ENCODE measurements at regions of chr1 and their contacts with region 1.

Region 1: DNA sequence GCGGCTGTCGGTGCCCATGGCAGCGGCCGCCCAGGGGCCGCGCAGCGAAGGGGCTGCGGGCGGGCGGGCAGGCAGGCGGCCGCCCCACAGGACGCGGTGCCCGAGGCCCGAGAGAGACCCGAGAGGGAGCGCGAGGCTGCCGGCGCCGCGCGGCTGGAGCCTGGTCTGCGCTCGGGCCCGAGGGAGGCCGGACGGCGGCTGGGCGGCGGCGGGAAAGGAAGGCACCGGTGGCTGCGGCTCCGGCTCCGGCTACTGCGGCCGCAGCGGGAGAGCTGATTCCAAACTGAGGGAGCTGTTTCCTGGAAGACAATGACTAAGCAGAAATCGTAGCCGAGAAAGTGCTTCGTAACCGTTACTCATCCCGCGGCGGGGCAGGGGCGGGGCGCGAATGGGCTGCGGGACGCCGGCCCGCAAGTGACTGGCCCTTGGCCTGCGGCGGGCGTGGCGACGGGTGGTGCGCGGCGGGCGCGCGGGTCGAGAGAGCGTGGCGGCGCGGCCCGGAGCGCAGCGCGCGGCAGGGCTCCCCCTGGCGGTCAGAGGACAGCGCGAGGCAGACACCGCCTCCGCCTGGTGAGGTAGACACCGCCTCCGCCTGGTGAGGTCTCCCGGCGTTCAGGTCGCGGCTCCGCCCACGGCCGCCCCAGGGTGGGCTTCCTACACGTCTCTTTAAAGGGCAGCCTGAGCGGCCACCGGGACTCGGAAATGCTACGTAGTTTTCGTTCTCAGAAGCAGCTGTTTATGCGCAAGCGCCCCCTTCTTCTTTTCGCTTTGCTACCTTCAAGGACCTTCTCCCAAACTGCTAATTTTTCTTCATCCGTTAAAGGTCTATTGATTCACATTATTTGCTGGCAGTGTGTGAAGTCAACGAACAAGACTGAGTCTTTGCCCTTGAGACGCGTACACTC is at the start of gene GCLM:
- DNase-seq: peak; percentile 94
- ATAC-seq: peak; percentile 94
- H3K4me3 ChIP-seq: peak within 1 kb of the TSS; percentile 74
- H3K27ac ChIP-seq: peak within 1 kb of the TSS; percentile 32
- H3K4me1 ChIP-seq: peaks cover 4% of the 10 kb centered on the region
- H3K27me3 ChIP-seq: no peaks in the 10 kb centered on the region
- CTCF ChIP-seq: peak; percentile 98
- POLR2A ChIP-seq: peak; percentile 92
- RAD21 ChIP-seq: peak; percentile 41; the same call in 1 of the 2 replicates
- total RNA-seq, gene GCLM: 18.3 and 20.1 TPM in 2 replicates

Region 2: DNA sequence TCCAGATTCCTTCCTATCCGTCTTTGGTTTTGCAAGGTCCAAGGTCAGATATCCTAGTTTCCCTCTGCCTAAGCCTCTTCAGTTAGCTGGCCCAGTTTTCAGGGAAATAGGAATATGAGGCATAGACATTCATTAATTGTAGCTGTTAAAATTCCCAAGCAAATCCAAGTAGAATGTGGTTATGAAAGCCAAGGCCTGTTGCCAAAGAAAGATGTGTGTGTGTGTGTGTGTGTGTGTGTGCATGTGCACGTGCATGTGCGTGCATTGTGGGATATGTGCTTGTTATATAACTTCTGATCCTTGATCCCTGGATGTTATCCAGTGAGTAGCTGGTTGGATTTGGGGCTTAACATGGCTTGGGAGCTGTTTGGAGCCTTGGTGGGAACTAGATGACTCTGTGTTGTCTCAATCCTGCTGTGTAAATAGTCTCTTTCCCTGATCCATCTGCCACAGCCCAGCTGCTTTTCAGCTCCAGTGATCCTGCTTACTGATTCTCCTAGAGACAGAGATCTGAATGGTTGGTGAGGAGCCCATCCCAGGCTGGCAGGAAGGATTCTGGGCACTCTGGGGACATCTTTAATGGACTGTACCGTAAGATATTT is 70.4 kb after region 1 on chr1:
- CTCF ChIA-PET with region 1: no interaction called
- POLR2A ChIA-PET with region 1: no interaction called
- dilution Hi-C with region 1: no loop called
- in situ Hi-C with region 1: no loop called
- intact Hi-C with region 1: loop called (anchors 1 kb)
- DNase-seq: peak; percentile 69
- ATAC-seq: peak; percentile 67
- H3K4me3 ChIP-seq: no peak overlapping the region
- H3K27ac ChIP-seq: peak overlapping the region; percentile 83; the same call in 1 of the 2 replicates
- H3K4me1 ChIP-seq: peaks cover 22% of the 10 kb centered on the region
- H3K27me3 ChIP-seq: peaks cover 6% of the 10 kb centered on the region; the same call in 1 of the 2 replicates
- CTCF ChIP-seq: no peak
- POLR2A ChIP-seq: no peak
- RAD21 ChIP-seq: no peak

Region 3: DNA sequence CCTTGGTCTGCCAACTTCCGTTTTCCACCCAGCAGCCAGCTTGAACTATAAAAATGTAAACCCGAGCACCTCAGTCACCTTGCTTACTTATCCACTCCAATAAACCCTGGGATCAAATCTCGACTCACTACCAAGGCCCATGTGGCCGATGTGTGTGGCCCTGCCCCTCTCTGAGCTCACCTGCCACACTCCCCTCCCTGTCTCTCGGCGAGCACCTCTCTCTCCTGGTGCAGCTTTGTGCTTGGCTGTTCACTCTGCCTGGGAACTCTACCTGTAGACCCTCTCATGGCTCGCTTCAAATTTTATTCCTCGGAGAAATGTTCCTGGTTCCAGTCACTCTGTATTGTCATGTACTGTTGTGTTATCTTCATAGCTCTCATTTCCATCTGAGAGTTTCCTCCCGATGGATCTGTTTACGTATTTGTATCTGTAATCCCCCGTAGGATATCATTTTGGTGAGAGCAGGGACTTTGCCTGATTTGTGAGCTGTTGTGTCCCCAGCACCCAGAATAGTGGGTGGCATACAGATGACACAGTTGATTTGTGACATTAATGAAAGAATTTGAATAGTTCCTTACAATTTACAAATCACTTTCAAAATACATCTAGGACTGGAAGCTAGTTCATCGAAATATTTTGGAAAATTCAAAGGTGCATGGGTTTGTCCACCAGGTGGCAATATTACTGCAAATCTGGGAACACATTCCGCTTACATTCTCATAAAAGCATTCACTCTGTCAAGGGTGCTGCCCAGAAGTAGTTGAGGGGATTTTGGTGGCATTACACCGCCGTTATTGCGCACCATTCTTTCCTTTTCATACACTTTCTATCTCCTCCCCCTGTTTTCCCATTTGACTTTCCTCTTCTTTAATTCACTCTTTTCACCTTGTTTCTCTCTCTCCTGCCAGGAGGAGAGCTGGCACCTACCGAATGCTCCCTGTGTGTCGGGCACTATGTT is 116.3 kb after region 1 on chr1:
- CTCF ChIA-PET with region 1: interaction called, 3 read pairs
- POLR2A ChIA-PET with region 1: no interaction called
- dilution Hi-C with region 1: no loop called
- in situ Hi-C with region 1: no loop called
- intact Hi-C with region 1: loop called (anchors 1 kb)
- DNase-seq: peak; percentile 79
- ATAC-seq: peak; percentile 50
- H3K4me3 ChIP-seq: no peak overlapping the region
- H3K27ac ChIP-seq: no peak overlapping the region
- H3K4me1 ChIP-seq: peaks cover 15% of the 10 kb centered on the region
- H3K27me3 ChIP-seq: no peaks in the 10 kb centered on the region
- CTCF ChIP-seq: peak; percentile 83
- POLR2A ChIP-seq: no peak
- RAD21 ChIP-seq: peak; percentile 81

Region 4: GRCh38 chr1:94237291-94238226 is 328.2 kb after region 1 on chr1 and contains the start of gene ARHGAP29:
- CTCF ChIA-PET with region 1: no interaction called
- POLR2A ChIA-PET with region 1: no interaction called
- dilution Hi-C with region 1: no loop called
- in situ Hi-C with region 1: no loop called
- intact Hi-C with region 1: loop called (anchors 10 kb)
- DNase-seq: peak; percentile 50
- ATAC-seq: peak; percentile 96
- H3K4me3 ChIP-seq: peak within 1 kb of the TSS; percentile 60
- H3K27ac ChIP-seq: peak within 1 kb of the TSS; percentile 27
- H3K4me1 ChIP-seq: peaks cover 1% of the 10 kb centered on the region; the same call in 1 of the 2 replicates
- H3K27me3 ChIP-seq: no peaks in the 10 kb centered on the region; the same call in 1 of the 2 replicates
- CTCF ChIP-seq: no peak
- POLR2A ChIP-seq: no peak
- RAD21 ChIP-seq: no peak
- total RNA-seq, gene ARHGAP29: 30.3 and 45.3 TPM in 2 replicates